PC-9 (cell line): ENCODE measurements at regions of chr2 and their contacts with region 1.

Region 1: GRCh38 chr2:105235388-105236054 is 6.0 kb upstream of the GPR45 start:
- DNase-seq: peak; percentile 61 to 65
- H3K4me3 ChIP-seq: no peak overlapping the region
- H3K27ac ChIP-seq: no peak overlapping the region
- H3K4me1 ChIP-seq: peaks cover 6% of the 10 kb centered on the region; the same call in 1 of the 2 replicates
- H3K27me3 ChIP-seq: no peaks in the 10 kb centered on the region
- CTCF ChIP-seq: peak; percentile 85

Region 2: GRCh38 chr2:104583811-104584210 is 651.7 kb before region 1 on chr2:
- CTCF ChIA-PET with region 1: no interaction called
- POLR2A ChIA-PET with region 1: no interaction called
- intact Hi-C with region 1: no loop called
- DNase-seq: no peak
- H3K4me3 ChIP-seq: no peak overlapping the region
- H3K27ac ChIP-seq: no peak overlapping the region
- H3K4me1 ChIP-seq: no peaks in the 10 kb centered on the region
- H3K27me3 ChIP-seq: peaks cover 38% of the 10 kb centered on the region
- CTCF ChIP-seq: no peak

Region 3: DNA sequence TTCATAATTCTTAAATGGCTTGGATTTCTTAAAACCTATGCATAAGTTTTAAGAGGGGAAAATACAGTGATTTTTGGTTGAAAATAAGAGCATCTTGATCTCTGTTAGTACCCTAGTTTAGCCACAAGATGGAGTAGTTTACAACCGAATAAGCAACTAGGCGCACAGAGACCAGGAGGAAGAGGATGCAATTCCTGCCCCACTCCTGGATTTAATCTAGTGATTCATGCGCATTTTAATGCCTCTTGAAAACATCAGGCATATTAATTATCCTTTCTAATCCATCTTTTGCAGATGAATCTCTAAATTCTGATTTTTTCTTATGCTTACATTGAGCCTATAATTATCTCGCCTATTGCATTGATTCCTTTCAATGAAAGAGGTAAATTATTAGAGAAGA is 121.0 kb before region 1 on chr2:
- CTCF ChIA-PET with region 1: interaction called, 5 read pairs
- POLR2A ChIA-PET with region 1: no interaction called
- intact Hi-C with region 1: loop called (anchors 1 kb)
- DNase-seq: peak in 1 of 2 experiments; percentile 46
- H3K4me3 ChIP-seq: no peak overlapping the region
- H3K27ac ChIP-seq: no peak overlapping the region
- H3K4me1 ChIP-seq: no peaks in the 10 kb centered on the region
- H3K27me3 ChIP-seq: no peaks in the 10 kb centered on the region
- CTCF ChIP-seq: peak; percentile 88

Region 4: GRCh38 chr2:105179469-105180372 is 55.8 kb before region 1 on chr2:
- CTCF ChIA-PET with region 1: no interaction called
- POLR2A ChIA-PET with region 1: no interaction called
- intact Hi-C with region 1: loop called (anchors 10 kb)
- DNase-seq: peak; percentile 31 to 66
- H3K4me3 ChIP-seq: no peak overlapping the region
- H3K27ac ChIP-seq: no peak overlapping the region
- H3K4me1 ChIP-seq: no peaks in the 10 kb centered on the region
- H3K27me3 ChIP-seq: peaks cover 38% of the 10 kb centered on the region
- CTCF ChIP-seq: no peak; the same call in 1 of the 2 replicates

Region 5: GRCh38 chr2:105557021-105557920 is 321.8 kb after region 1 on chr2:
- CTCF ChIA-PET with region 1: interaction called, 12 read pairs
- POLR2A ChIA-PET with region 1: no interaction called
- intact Hi-C with region 1: no loop called
- DNase-seq: no peak
- H3K4me3 ChIP-seq: no peak overlapping the region
- H3K27ac ChIP-seq: no peak overlapping the region
- H3K4me1 ChIP-seq: peaks cover 20% of the 10 kb centered on the region
- H3K27me3 ChIP-seq: peaks cover 74% of the 10 kb centered on the region
- CTCF ChIP-seq: no peak